Tibial artery (tissue), 4 donors: ENCODE measurements at regions of chr19 and their contacts with region 1.

Region 1: GRCh38 chr19:38315657-38316476 is at the start of gene YIF1B:
- DNase-seq: peak; percentile 98 to 99
- H3K4me3 ChIP-seq: peak within 1 kb of the TSS; percentile 49 to 66
- H3K27ac ChIP-seq: peak within 1 kb of the TSS; percentile 73 to 76
- H3K4me1 ChIP-seq: peaks cover 7 to 31% (median 22%) of the 10 kb centered on the region in 4 donors
- H3K27me3 ChIP-seq: no peaks in the 10 kb centered on the region
- CTCF ChIP-seq: no peak

Region 2: GRCh38 chr19:38233740-38234251 is 82.1 kb before region 1 on chr19:
- intact Hi-C with region 1: no loop called
- DNase-seq: peak; percentile 80 to 82
- H3K4me3 ChIP-seq: no peak overlapping the region
- H3K27ac ChIP-seq: no peak overlapping the region
- H3K4me1 ChIP-seq: peaks cover 0 to 11% (median 7%) of the 10 kb centered on the region in 4 donors
- H3K27me3 ChIP-seq: peaks cover 4 to 21% of the 10 kb centered on the region in 2 donors
- CTCF ChIP-seq: peak; percentile 84

Region 3: DNA sequence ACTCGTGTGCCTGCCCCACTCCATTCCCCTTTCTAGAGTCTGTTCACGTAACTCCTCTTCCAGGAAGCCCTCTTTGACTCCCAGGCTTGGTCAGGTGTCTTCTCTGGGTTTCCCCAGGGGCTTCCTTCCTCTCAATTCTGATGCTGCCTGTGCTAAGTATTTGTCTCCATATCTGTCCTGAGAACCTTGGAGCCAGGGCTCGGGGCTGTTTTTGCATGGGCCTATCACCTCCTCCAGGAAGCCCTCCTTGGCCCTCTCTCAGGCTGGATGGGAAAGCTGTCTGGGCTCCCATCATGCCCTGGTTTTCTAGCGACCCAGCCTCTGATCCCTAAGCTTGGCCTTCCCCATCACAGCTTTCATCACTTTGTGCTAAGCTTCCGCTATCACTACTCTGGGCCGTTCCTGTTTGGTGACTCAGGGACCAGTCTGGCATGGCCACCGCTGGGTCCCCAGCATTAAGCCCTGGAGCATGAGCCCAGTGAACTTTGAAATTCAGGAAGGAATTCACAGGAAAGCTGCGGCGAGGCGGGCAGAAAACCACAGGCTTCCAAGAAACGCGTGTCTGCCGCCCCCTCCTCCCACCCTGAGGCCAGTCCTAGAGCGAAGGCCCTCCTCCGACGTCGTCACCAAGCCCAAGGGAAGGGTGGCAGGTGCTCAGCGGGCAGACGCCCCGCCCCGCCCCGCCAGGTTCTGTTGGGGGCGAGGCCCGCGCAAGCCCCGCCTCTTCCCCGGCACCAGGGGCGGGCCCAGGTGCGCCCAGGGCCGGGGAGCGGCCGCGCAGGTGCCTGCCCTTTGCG is 52.0 kb before region 1 on chr19:
- intact Hi-C with region 1: loop called (anchors 10 kb)
- DNase-seq: no peak
- H3K4me3 ChIP-seq: peak overlapping the region; percentile 54 to 62
- H3K27ac ChIP-seq: peak overlapping the region; percentile 81
- H3K4me1 ChIP-seq: peaks cover 4 to 33% (median 21%) of the 10 kb centered on the region in 4 donors
- H3K27me3 ChIP-seq: no peaks in the 10 kb centered on the region
- CTCF ChIP-seq: no peak

Region 4: GRCh38 chr19:38452428-38453366 is 136.8 kb after region 1 on chr19:
- intact Hi-C with region 1: no loop called
- DNase-seq: no peak
- H3K4me3 ChIP-seq: no peak overlapping the region
- H3K27ac ChIP-seq: no peak overlapping the region
- H3K4me1 ChIP-seq: no peaks in the 10 kb centered on the region
- H3K27me3 ChIP-seq: no peaks in the 10 kb centered on the region
- CTCF ChIP-seq: no peak